ENCODE measurements at regions of chr14 and their contacts with region 1.

Region 1: DNA sequence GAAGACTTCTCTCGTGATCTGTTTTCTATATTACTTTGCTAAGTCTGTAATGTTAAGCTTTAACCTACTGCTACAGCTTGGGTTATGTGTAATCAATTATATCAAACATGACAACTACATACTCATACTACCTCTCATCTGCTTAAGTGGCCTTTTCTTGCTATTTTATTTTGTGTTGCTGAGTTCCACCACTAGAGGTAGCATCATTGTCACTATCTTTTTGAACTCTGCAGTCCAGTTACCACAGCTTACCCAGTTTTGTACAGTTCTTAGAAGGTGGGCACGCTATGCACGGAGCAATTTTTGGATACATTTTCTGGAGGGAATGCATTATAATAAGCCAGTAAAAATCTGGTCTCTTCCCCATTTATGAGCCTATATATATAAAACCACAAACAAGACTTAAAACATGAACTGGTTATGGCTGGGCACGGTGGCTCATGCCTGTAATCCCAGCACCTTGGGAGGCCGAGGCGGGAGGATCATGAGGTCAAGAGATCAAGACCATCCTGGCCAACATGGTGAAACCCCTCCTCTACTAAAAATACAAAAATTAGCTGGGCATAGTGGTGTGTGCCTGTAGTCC is 48.5 kb downstream of the SAV1 start:
- DNase-seq: no peak
- H3K4me3 ChIP-seq: no peak overlapping the region
- H3K27ac ChIP-seq: no peak overlapping the region
- H3K4me1 ChIP-seq: no peaks in the 10 kb centered on the region
- H3K27me3 ChIP-seq: no peaks in the 10 kb centered on the region
- CTCF ChIP-seq: peak; percentile 72

Region 2: GRCh38 chr14:50714450-50715073 is 94.9 kb after region 1 on chr14:
- intact Hi-C with region 1: loop called (anchors 10 kb)
- DNase-seq: no peak
- H3K4me3 ChIP-seq: no peak overlapping the region
- H3K27ac ChIP-seq: no peak overlapping the region
- H3K4me1 ChIP-seq: no peaks in the 10 kb centered on the region
- H3K27me3 ChIP-seq: no peaks in the 10 kb centered on the region
- CTCF ChIP-seq: peak; percentile 56

Region 3: DNA sequence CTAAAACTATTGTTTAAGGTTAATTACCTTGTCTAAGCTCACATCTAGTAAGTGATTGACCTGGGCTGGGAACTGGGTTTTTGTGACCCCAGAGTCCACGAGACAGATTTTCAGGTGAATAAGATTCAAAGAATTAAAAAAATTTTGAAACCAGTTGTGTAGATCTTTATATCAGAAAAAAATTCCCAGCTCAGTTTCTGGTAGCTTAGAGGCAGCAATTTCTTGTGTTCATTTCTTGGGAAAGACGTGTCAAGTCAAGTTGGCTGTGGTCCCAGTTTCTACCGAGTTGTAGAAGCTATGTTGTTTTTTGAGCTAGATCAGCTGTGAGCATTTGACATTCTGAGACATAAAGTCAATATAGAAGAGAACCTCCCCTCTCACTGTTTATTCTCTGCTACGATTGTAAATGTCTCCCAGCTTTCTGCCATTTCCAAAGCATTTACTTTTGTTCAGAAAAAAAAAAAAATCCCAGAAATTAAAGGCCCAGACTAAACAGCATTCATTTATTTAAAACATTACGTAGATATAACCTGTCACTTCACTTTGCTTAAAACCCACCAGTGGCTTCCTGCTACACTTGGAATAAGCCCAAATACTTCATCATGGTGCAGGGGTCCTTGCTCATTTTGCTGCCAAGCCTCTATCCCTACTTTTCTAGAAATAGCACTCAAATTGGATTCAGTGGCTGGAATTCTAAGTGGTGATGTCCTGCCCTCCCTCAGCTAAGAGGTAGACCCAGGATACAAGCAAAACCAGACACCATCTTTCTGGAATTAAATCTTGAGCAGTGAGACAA is 345.1 kb after region 1 on chr14:
- intact Hi-C with region 1: no loop called
- DNase-seq: no peak
- H3K4me3 ChIP-seq: no peak overlapping the region
- H3K27ac ChIP-seq: no peak overlapping the region
- H3K4me1 ChIP-seq: no peaks in the 10 kb centered on the region
- H3K27me3 ChIP-seq: no peaks in the 10 kb centered on the region
- CTCF ChIP-seq: no peak

Measured in left ventricle myocardium inferior (tissue), 1 donor.